ENCODE measurements at regions of chr10 and their contacts with region 1.

Region 1: DNA sequence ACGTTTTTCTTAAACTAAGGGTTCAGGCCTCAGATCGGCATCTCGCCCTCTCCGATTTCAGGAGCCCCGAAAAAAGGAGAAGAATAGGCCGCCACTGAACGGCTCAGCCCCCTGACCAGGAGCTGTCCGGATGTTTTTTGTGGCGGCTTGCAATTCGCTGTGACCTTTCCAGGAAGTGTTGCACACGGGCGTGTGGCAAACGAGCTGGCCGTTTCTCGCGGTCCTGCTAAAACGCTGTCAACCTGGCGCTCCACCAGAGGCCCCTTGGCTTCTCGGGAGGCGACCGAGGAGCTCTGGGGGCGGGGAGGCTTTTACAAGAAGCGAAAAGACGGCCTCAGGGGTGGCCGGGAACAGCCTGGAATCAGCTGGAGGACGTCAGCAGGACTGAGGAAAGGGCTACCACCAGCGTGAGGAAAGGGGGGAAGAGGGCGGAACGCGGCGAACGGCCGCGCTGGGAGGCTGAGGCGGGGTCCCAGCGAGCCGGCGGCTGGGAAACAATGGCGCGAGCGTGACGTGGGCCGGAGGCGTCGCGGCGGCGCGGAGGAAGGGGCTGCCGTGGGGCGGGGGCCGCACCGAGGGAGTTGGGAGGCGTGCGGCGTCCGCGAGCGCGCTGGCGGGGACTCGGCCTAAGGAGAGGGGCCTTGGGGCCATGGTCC is 493 bp downstream of the NT5C2 start:
- DNase-seq: peak; percentile 40 to 72 (median 66)
- H3K4me3 ChIP-seq: peak overlapping the region; percentile 61 to 98 (median 87)
- H3K27ac ChIP-seq: peak overlapping the region; percentile 75 to 98 (median 95)
- H3K27me3 ChIP-seq: no peaks in the 10 kb centered on the region
- CTCF ChIP-seq: peak in 2 of 56 donors; percentile 4 to 22

Region 2: DNA sequence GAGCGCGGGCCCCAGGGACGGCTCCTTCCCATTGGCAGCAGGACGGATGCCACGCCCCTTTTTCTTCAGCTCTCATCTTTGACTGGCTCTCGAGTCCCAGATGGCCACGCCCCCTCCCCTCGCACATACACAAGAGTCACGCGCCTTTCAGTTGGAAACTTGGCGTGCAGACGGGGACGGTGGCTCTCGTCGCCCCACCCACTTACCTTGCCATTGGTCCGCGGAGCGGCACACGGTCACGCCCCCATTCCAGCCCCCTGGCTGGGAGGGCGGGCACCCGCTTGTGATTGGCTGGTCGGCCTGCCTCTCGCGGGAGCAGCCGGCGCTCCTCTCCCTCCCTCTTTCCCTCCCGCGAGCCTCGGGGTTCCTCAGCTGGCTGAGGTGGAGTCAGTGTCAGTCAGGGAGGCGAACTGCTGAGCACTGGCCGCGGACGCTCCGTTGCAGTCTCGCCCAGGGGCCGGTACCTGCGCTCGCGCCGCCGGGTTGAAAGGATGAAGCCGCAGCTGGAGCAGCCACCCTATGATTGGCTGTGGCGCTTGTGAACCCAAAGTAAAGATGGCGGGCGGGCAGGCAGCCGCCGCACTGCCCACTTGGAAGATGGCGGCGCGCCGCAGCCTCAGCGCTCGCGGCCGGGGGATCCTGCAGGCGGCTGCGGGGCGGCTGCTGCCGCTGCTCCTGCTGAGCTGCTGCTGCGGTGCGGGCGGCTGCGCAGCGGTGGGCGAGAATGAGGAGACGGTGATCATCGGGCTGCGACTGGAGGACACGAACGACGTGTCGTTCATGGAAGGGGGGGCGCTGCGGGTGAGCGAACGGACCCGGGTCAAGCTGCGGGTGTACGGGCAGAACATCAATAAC is 274.4 kb before region 1 on chr10 and contains the start of gene CNNM2:
- intact Hi-C with region 1: loop called (anchors 2 to 5 kb)
- DNase-seq: peak; percentile 99 to 100 (median 100)
- H3K4me3 ChIP-seq: peak within 1 kb of the TSS; percentile 66 to 99 (median 93)
- H3K27ac ChIP-seq: peak within 1 kb of the TSS; percentile 84 to 99 (median 97)
- H3K27me3 ChIP-seq: no peaks in the 10 kb centered on the region
- CTCF ChIP-seq: peak in 17 of 56 donors; percentile 2 to 49 (median 14)
- total RNA-seq, gene CNNM2: 25.2 to 40.5 (median 31.9) TPM

Region 3: GRCh38 chr10:103086799-103087198 is 105.8 kb before region 1 on chr10:
- intact Hi-C with region 1: loop called in 1 of 2 experiments (anchors 5 kb)
- DNase-seq: no peak
- H3K4me3 ChIP-seq: no peak overlapping the region
- H3K27ac ChIP-seq: peak overlapping the region in 8 of 59 donors; percentile 2 to 36 (median 20)
- H3K27me3 ChIP-seq: no peaks in the 10 kb centered on the region
- CTCF ChIP-seq: no peak

Region 4: DNA sequence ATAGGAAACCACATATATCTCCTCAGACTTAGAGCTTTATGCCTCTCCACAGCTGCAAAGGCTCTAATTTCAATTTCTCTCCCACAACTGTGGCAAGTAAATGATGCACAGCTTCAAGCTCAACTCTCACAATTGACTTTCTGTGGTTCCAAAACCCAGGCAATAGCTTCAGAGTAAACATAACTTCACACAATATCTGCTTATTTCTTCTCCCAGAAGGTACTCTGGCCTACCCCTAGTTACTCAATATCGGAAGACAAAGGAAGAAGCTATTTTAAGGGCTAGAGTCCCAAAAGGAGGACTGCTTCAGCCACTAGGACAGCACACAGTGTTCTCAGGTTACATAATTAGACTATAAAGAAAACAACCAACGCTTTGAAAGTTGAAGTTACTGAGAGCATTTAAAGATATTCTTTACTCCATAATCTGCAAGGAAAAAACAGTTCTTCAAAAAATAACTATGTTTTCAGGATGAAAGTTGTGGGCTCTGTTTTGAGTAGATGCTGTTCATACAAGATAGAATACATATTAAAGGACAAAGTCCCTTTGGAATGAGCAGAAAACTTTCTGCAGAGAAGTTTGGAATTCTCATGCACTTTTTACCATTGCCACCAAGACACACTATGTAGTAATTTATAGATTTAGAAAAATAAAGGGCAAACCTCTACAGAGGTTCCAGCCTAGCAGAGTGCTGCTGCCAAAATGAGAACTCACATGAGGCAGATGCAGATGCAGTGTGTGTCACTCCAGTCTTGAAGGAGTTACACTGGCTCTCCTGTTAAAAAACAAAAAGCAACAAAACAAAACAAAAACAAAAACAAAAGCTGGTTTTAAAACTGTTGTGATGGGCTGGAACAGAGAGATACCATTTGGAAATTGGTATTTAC is 81.3 kb before region 1 on chr10:
- intact Hi-C with region 1: loop called in 1 of 2 experiments (anchors 2 kb)
- DNase-seq: no peak
- H3K4me3 ChIP-seq: peak overlapping the region in 21 of 59 donors; percentile 1 to 41 (median 10)
- H3K27ac ChIP-seq: peak overlapping the region; percentile 62 to 97 (median 90)
- H3K27me3 ChIP-seq: no peaks in the 10 kb centered on the region
- CTCF ChIP-seq: peak in 10 of 56 donors; percentile 4 to 34 (median 18)

Region 5: DNA sequence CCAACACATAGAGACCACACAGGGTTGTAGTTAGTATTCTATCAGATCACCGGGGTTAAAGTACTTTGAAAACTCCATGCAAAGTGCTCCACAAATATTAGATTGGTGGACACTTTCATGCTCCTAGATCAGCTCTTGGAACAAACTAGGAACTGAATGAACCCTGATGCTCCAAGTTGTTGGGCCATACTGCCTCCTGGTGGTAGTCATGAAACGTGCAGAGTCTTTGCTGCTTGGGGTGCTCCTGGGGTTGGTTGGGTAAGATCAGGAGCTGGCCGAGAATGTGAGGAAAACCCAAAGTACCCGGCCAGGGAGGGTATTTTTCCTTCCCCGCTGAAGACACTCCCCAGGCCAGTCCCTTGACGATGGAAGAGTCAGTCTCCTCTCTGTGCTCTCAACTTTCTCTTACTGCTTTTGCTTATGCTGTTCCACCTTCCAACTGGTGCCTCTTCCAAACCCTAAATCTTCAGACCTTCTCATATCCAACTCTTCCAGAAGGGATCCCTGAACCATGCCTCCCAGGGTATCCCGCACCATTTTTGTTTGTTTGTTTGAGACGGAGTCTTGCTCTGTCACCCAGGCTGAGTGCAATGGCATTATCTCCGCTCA is 52.2 kb after region 1 on chr10:
- intact Hi-C with region 1: loop called in 1 of 2 experiments (anchors 5 kb)
- DNase-seq: peak; percentile 41 to 82 (median 70)
- H3K4me3 ChIP-seq: peak overlapping the region in 2 of 59 donors; percentile 6 to 31
- H3K27ac ChIP-seq: no peak overlapping the region
- H3K27me3 ChIP-seq: no peaks in the 10 kb centered on the region
- CTCF ChIP-seq: peak; percentile 52 to 96 (median 88)